Esophagus muscularis mucosa (tissue), 4 donors: ENCODE measurements at regions of chr2 and their contacts with region 1.

Region 1: GRCh38 chr2:176554101-176555048 is 285.1 kb downstream of the MTX2 start:
- DNase-seq: no peak
- H3K4me3 ChIP-seq: peak overlapping the region; percentile 49 to 64 (median 56)
- H3K27ac ChIP-seq: peak overlapping the region; percentile 58 to 72 (median 66)
- H3K4me1 ChIP-seq: peaks cover 0 to 24% (median 23%) of the 10 kb centered on the region in 4 donors
- H3K27me3 ChIP-seq: peaks cover 0 to 45% (median 0%) of the 10 kb centered on the region in 4 donors
- CTCF ChIP-seq: peak; percentile 71 to 75 (median 72)
- EP300 ChIP-seq: no peak
- POLR2A ChIP-seq: no peak

Region 2: GRCh38 chr2:176140513-176141317 is 413.7 kb before region 1 on chr2:
- intact Hi-C with region 1: loop called (anchors 2 kb)
- DNase-seq: no peak
- H3K4me3 ChIP-seq: peak overlapping the region; percentile 49 to 65 (median 54)
- H3K27ac ChIP-seq: peak overlapping the region in 3 of 4 donors; percentile 22 to 37 (median 35)
- H3K4me1 ChIP-seq: peaks cover 22 to 41% (median 30%) of the 10 kb centered on the region in 4 donors
- H3K27me3 ChIP-seq: peaks cover 14 to 91% (median 51%) of the 10 kb centered on the region in 4 donors
- CTCF ChIP-seq: peak; percentile 75 to 92 (median 87)
- EP300 ChIP-seq: no peak
- POLR2A ChIP-seq: no peak

Region 3: GRCh38 chr2:176269319-176270099 is 284.9 kb before region 1 on chr2 and contains the start of gene MTX2:
- intact Hi-C with region 1: loop called (anchors 10 kb)
- DNase-seq: no peak
- H3K4me3 ChIP-seq: peak within 1 kb of the TSS; percentile 71 to 92 (median 84)
- H3K27ac ChIP-seq: peak within 1 kb of the TSS; percentile 79 to 91 (median 84)
- H3K4me1 ChIP-seq: peaks cover 9 to 38% (median 22%) of the 10 kb centered on the region in 4 donors
- H3K27me3 ChIP-seq: no peaks in the 10 kb centered on the region
- CTCF ChIP-seq: peak in 2 of 3 experiments; percentile 19 to 30
- EP300 ChIP-seq: no peak
- POLR2A ChIP-seq: no peak
- total RNA-seq, gene MTX2: 26.2 to 31.1 (median 27.6) TPM

Region 4: GRCh38 chr2:176443946-176444345 is 110.4 kb before region 1 on chr2:
- intact Hi-C with region 1: no loop called
- DNase-seq: no peak
- H3K4me3 ChIP-seq: no peak overlapping the region
- H3K27ac ChIP-seq: no peak overlapping the region
- H3K4me1 ChIP-seq: no peaks in the 10 kb centered on the region
- H3K27me3 ChIP-seq: no peaks in the 10 kb centered on the region
- CTCF ChIP-seq: no peak
- EP300 ChIP-seq: no peak
- POLR2A ChIP-seq: no peak

Region 5: GRCh38 chr2:176454893-176455811 is 99.2 kb before region 1 on chr2:
- intact Hi-C with region 1: loop called (anchors 5 kb)
- DNase-seq: peak; percentile 96
- H3K4me3 ChIP-seq: no peak overlapping the region
- H3K27ac ChIP-seq: peak overlapping the region; percentile 35 to 59 (median 46)
- H3K4me1 ChIP-seq: peaks cover 8 to 14% (median 10%) of the 10 kb centered on the region in 4 donors
- H3K27me3 ChIP-seq: peaks cover 0 to 37% (median 0%) of the 10 kb centered on the region in 4 donors
- CTCF ChIP-seq: peak; percentile 76 to 98 (median 96)
- EP300 ChIP-seq: no peak
- POLR2A ChIP-seq: no peak

Region 6: DNA sequence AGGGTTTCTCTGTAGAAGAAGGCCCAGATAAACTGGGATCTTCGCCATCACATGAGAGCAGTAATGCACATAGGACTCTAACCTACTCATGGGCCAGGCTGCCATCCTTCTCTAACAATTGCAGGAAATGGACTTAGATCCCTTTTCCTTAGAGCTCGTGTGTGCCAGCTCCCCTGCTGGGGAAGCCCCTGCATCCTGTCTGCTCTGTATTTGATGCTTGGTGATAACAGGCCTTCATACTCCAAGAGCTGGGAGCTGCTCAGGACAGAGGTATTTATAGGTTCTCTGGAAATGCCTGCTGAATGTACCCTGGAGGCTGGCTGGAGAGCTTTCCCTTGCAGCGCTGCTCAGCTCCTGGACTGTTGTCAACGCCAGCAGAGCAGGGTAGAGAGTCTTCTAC is 35.6 kb before region 1 on chr2:
- intact Hi-C with region 1: no loop called
- DNase-seq: no peak
- H3K4me3 ChIP-seq: no peak overlapping the region
- H3K27ac ChIP-seq: no peak overlapping the region
- H3K4me1 ChIP-seq: peaks cover 0 to 7% (median 0%) of the 10 kb centered on the region in 4 donors
- H3K27me3 ChIP-seq: no peaks in the 10 kb centered on the region
- CTCF ChIP-seq: no peak
- EP300 ChIP-seq: no peak
- POLR2A ChIP-seq: no peak

Region 7: GRCh38 chr2:176638167-176639015 is 84.0 kb after region 1 on chr2:
- intact Hi-C with region 1: loop called (anchors 5 kb)
- DNase-seq: no peak
- H3K4me3 ChIP-seq: peak overlapping the region; percentile 63 to 76 (median 66)
- H3K27ac ChIP-seq: peak overlapping the region in 3 of 4 donors; percentile 66 to 76 (median 70)
- H3K4me1 ChIP-seq: peaks cover 8 to 15% (median 10%) of the 10 kb centered on the region in 4 donors
- H3K27me3 ChIP-seq: peaks cover 0 to 94% (median 11%) of the 10 kb centered on the region in 4 donors
- CTCF ChIP-seq: peak; percentile 69 to 77 (median 73)
- EP300 ChIP-seq: no peak
- POLR2A ChIP-seq: no peak

Region 8: DNA sequence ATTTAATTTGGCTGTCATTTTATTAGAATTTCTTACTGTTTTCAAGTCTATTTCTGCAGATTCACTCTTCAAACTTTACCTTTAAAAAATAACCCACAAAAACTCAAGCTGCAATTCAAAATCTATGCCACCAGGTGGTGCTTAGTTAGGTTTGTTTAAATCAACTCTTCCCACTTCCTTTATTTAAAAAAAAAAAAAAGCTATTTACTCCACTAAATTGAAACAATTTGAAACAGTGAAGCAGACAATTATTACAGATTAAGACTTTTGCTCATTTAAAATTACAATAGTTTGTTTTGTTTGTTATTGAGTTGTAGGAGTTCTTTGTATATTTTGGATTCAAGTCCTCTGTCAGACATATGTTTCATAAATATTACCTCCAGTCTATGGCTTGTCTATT is 1218.2 kb after region 1 on chr2:
- intact Hi-C with region 1: no loop called
- DNase-seq: no peak
- H3K4me3 ChIP-seq: no peak overlapping the region
- H3K27ac ChIP-seq: no peak overlapping the region
- H3K4me1 ChIP-seq: no peaks in the 10 kb centered on the region
- H3K27me3 ChIP-seq: no peaks in the 10 kb centered on the region
- CTCF ChIP-seq: peak in 2 of 3 experiments; percentile 16 to 40
- EP300 ChIP-seq: no peak
- POLR2A ChIP-seq: no peak